CD8-positive, alpha-beta memory T cell (primary cell): ENCODE measurements at regions of chr2 and their contacts with region 1.

Region 1: DNA sequence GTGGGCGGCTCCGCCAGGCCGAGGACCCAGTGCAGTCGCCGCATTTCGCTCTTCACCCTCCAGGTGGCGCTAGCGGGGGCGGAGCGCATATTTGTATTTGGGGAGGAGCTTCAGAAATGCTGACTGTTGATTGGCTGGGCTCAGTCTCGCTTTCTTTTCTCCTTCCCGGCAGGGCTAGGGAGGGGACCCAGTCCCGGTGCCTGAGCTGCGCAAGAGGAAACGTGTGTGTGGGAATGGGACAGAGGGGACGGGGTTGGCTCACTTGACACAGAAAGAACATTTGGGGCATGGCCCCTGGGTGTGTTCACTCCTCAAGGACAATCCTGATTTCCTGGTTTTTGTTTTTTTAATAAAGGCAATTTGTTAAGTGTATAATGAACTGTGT is 20.3 kb upstream of the DNMT3A start:
- DNase-seq: peak; percentile 88 to 95 (median 92)
- H3K4me3 ChIP-seq: peak overlapping the region; percentile 88
- H3K4me3 Mint-ChIP-seq: peak overlapping the region; percentile 86 to 95 (median 92)
- H3K27ac ChIP-seq: peak overlapping the region; percentile 69
- H3K27ac Mint-ChIP-seq: peak overlapping the region; percentile 84 to 99 (median 94)
- H3K4me1 ChIP-seq: peaks cover 16% of the 10 kb centered on the region
- H3K4me1 Mint-ChIP-seq: peaks cover 22 to 30% (median 23%) of the 10 kb centered on the region in 3 donors
- H3K27me3 ChIP-seq: no peaks in the 10 kb centered on the region
- H3K27me3 Mint-ChIP-seq: no peaks in the 10 kb centered on the region

Region 2: DNA sequence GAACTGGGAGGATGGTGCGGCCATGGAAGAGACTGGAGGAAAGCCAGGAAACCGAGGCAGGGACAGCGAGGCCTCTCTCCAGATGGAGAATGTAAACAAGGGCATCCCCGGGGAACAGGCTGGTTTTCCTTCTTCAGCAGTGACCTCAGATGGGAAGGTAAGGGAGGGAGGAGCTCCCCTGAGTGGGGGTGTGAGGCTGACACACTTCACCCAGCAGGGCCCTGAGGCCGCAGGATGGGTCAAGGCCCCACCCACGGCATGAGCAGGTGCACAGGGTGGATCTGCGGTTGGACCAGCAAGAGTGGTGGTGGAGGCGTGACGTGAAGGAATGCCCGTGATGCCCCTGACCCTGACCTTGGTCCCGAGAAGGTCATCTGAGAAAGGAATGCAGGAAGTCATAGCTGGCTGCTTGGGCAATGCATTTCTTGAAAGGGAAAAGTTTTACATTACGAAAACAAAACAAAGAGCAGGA is 490.2 kb before region 1 on chr2:
- CTCF ChIA-PET with region 1: no interaction called
- POLR2A ChIA-PET with region 1: no interaction called
- DNase-seq: no peak
- H3K4me3 ChIP-seq: no peak overlapping the region
- H3K4me3 Mint-ChIP-seq: no peak overlapping the region
- H3K27ac ChIP-seq: no peak overlapping the region
- H3K27ac Mint-ChIP-seq: peak overlapping the region in 2 of 8 donors; percentile 2 to 37
- H3K4me1 ChIP-seq: no peaks in the 10 kb centered on the region
- H3K4me1 Mint-ChIP-seq: peaks cover 2 to 11% (median 6%) of the 10 kb centered on the region in 3 donors
- H3K27me3 ChIP-seq: no peaks in the 10 kb centered on the region
- H3K27me3 Mint-ChIP-seq: no peaks in the 10 kb centered on the region

Region 3: GRCh38 chr2:25252281-25253105 is 109.5 kb before region 1 on chr2:
- CTCF ChIA-PET with region 1: interaction called, 11 read pairs
- POLR2A ChIA-PET with region 1: interaction called, 8 read pairs
- DNase-seq: peak; percentile 32 to 76 (median 54)
- H3K4me3 ChIP-seq: peak overlapping the region; percentile 26
- H3K4me3 Mint-ChIP-seq: peak overlapping the region; percentile 75 to 91 (median 85)
- H3K27ac ChIP-seq: no peak overlapping the region
- H3K27ac Mint-ChIP-seq: peak overlapping the region; percentile 45 to 83 (median 68)
- H3K4me1 ChIP-seq: peaks cover 17% of the 10 kb centered on the region
- H3K4me1 Mint-ChIP-seq: peaks cover 30 to 43% (median 37%) of the 10 kb centered on the region in 3 donors
- H3K27me3 ChIP-seq: no peaks in the 10 kb centered on the region
- H3K27me3 Mint-ChIP-seq: peaks cover 0 to 4% of the 10 kb centered on the region in 2 donors

Region 4: DNA sequence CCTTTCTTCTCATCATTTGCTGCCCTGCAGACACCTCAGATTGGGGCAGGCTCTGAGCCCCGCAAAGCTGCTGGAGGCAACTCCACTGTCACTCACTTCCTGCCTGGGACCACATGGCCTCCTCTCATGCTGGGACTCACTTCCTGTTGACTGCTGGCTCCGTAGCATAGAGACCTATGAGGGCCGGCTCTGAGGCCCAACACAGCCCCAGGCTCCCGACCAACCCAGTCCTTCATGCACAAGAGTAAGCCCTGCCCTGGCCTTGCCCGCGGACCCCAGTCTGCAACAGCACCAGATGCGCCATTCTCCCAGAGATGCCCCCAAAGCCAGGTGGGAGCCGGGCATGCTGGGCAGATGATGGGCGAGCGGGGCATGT is 76.0 kb before region 1 on chr2:
- CTCF ChIA-PET with region 1: interaction called, 7 read pairs
- POLR2A ChIA-PET with region 1: interaction called, 10 read pairs
- DNase-seq: peak; percentile 46 to 84 (median 69)
- H3K4me3 ChIP-seq: peak overlapping the region; percentile 34
- H3K4me3 Mint-ChIP-seq: peak overlapping the region; percentile 35 to 87 (median 76)
- H3K27ac ChIP-seq: peak overlapping the region; percentile 54
- H3K27ac Mint-ChIP-seq: peak overlapping the region; percentile 95 to 99 (median 96)
- H3K4me1 ChIP-seq: peaks cover 51% of the 10 kb centered on the region
- H3K4me1 Mint-ChIP-seq: peaks cover 30 to 53% (median 36%) of the 10 kb centered on the region in 3 donors
- H3K27me3 ChIP-seq: no peaks in the 10 kb centered on the region
- H3K27me3 Mint-ChIP-seq: no peaks in the 10 kb centered on the region

Region 5: GRCh38 chr2:25309402-25309801 is 52.6 kb before region 1 on chr2:
- CTCF ChIA-PET with region 1: interaction called, 21 read pairs
- POLR2A ChIA-PET with region 1: interaction called, 9 read pairs
- DNase-seq: peak; percentile 40 to 75 (median 45)
- H3K4me3 ChIP-seq: no peak overlapping the region
- H3K4me3 Mint-ChIP-seq: peak overlapping the region in 2 of 7 donors; percentile 59 to 61
- H3K27ac ChIP-seq: no peak overlapping the region
- H3K27ac Mint-ChIP-seq: peak overlapping the region; percentile 11 to 99 (median 74)
- H3K4me1 ChIP-seq: peaks cover 78% of the 10 kb centered on the region
- H3K4me1 Mint-ChIP-seq: peaks cover 72 to 94% (median 75%) of the 10 kb centered on the region in 3 donors
- H3K27me3 ChIP-seq: no peaks in the 10 kb centered on the region
- H3K27me3 Mint-ChIP-seq: no peaks in the 10 kb centered on the region

Region 6: GRCh38 chr2:25323042-25323514 is 39.0 kb before region 1 on chr2:
- CTCF ChIA-PET with region 1: interaction called, 12 read pairs
- POLR2A ChIA-PET with region 1: interaction called, 10 read pairs
- DNase-seq: peak in 4 of 5 donors; percentile 50 to 86 (median 60)
- H3K4me3 ChIP-seq: peak overlapping the region; percentile 55
- H3K4me3 Mint-ChIP-seq: peak overlapping the region; percentile 74 to 97 (median 89)
- H3K27ac ChIP-seq: peak overlapping the region; percentile 28
- H3K27ac Mint-ChIP-seq: peak overlapping the region; percentile 81 to 97 (median 94)
- H3K4me1 ChIP-seq: peaks cover 23% of the 10 kb centered on the region
- H3K4me1 Mint-ChIP-seq: peaks cover 41 to 55% (median 46%) of the 10 kb centered on the region in 3 donors
- H3K27me3 ChIP-seq: no peaks in the 10 kb centered on the region
- H3K27me3 Mint-ChIP-seq: no peaks in the 10 kb centered on the region

Region 7: DNA sequence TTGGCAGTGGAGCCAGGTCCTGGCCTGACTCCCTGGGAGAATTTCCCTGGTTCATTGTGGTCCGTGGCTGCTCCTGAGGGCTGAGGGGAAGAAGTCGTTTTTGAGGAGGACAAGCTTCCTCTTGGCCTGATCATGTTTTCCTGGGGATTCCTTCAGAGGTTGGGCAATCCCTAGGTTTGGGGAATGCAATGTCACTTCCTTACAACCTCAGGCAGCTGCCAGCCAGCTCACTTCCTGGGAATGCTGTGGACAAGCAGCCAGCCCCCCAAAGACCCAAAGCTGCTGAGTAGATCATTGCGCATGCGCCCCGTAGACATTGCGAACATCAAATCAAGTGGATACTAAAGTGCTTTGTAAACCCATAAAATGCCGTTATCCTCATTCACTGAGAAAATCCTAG is 12.6 kb before region 1 on chr2:
- CTCF ChIA-PET with region 1: interaction called, 14 read pairs
- POLR2A ChIA-PET with region 1: interaction called, 3 read pairs
- DNase-seq: no peak
- H3K4me3 ChIP-seq: no peak overlapping the region
- H3K4me3 Mint-ChIP-seq: no peak overlapping the region
- H3K27ac ChIP-seq: no peak overlapping the region
- H3K27ac Mint-ChIP-seq: no peak overlapping the region
- H3K4me1 ChIP-seq: no peaks in the 10 kb centered on the region
- H3K4me1 Mint-ChIP-seq: peaks cover 11 to 14% (median 14%) of the 10 kb centered on the region in 3 donors
- H3K27me3 ChIP-seq: no peaks in the 10 kb centered on the region
- H3K27me3 Mint-ChIP-seq: peaks cover 9 to 14% of the 10 kb centered on the region in 2 donors

Region 8: DNA sequence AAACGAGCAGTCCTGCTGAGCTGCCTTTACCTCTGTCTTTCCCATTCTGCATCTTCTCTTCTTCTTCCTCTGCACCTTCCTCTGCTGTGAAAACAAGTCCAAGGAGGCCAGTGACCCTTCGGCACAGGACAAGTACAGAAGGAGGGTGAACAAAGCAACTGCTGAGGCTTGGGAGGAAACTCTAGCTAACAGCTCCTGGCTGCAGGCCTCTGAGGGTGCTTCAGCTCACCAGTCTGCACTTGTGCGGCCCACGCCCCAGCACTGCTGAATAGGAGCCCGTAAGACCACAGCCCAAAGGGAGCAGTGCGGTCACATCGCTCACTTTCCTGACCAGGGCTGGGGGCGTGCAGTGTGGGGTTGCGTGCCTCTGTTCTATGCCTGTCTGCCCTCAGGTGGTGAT is 21.8 kb after region 1 on chr2:
- CTCF ChIA-PET with region 1: interaction called, 116 read pairs
- POLR2A ChIA-PET with region 1: interaction called, 9 read pairs
- DNase-seq: no peak
- H3K4me3 ChIP-seq: no peak overlapping the region
- H3K4me3 Mint-ChIP-seq: no peak overlapping the region
- H3K27ac ChIP-seq: no peak overlapping the region
- H3K27ac Mint-ChIP-seq: no peak overlapping the region
- H3K4me1 ChIP-seq: peaks cover 9% of the 10 kb centered on the region
- H3K4me1 Mint-ChIP-seq: peaks cover 5 to 16% (median 10%) of the 10 kb centered on the region in 3 donors
- H3K27me3 ChIP-seq: no peaks in the 10 kb centered on the region
- H3K27me3 Mint-ChIP-seq: peaks cover 0 to 4% of the 10 kb centered on the region in 2 donors

Region 9: GRCh38 chr2:25447018-25447417 is 85.0 kb after region 1 on chr2:
- CTCF ChIA-PET with region 1: no interaction called
- POLR2A ChIA-PET with region 1: no interaction called
- DNase-seq: no peak
- H3K4me3 ChIP-seq: no peak overlapping the region
- H3K4me3 Mint-ChIP-seq: no peak overlapping the region
- H3K27ac ChIP-seq: no peak overlapping the region
- H3K27ac Mint-ChIP-seq: no peak overlapping the region
- H3K4me1 ChIP-seq: no peaks in the 10 kb centered on the region
- H3K4me1 Mint-ChIP-seq: no peaks in the 10 kb centered on the region
- H3K27me3 ChIP-seq: no peaks in the 10 kb centered on the region
- H3K27me3 Mint-ChIP-seq: no peaks in the 10 kb centered on the region